ENCODE measurements at regions of chr6 and their contacts with region 1.

Region 1: DNA sequence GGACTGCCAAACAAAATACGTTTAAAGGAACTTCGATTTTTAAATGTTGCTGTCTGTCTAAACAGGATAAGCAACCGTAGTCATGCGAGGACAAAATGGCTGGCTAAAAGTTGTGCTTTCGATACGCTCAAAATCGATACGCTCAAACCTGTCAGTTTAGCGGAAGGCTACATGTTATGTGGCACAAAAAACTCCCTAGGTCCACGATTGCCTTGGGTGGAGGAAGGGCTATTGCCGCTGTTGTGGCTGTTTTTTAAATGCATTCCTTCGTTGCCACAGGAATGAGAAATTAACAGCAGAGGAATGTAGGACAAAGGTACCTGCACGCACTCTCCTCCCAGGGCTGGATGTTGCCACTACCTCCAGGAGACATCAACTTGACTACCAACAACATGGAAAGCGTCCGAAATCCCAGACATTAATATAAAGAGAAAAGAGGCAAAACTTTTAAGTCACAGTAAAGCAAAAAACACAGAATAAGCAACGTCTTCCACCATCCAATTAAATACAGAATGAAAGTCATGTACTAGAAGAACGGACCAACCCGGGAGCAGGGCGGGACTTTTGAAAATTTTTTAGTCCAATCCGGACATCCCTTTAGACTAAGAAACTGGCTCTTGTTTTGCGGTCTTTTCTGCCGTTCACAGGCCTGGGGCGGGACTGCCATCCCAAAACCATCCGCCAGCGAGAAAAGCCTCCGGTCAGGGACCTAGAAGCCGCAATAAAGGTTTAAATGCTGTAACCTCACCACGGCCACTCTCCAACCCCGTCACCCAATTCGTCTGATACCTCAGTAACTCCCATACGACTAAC is 32.2 kb upstream of the HFE start:
- DNase-seq: peak; percentile 97
- H3K4me3 ChIP-seq: peak overlapping the region; percentile 59 to 83 (median 78)
- H3K27ac ChIP-seq: peak overlapping the region; percentile 88 to 99 (median 97)
- H3K4me1 ChIP-seq: peaks cover 2 to 15% (median 7%) of the 10 kb centered on the region in 4 donors
- H3K27me3 ChIP-seq: no peaks in the 10 kb centered on the region
- CTCF ChIP-seq: peak in 3 of 4 experiments; percentile 12 to 39 (median 34)
- EP300 ChIP-seq: no peak
- POLR2A ChIP-seq: peak; percentile 72 to 74

Region 2: GRCh38 chr6:25981568-25982263 is 73.3 kb before region 1 on chr6:
- intact Hi-C with region 1: no loop called
- DNase-seq: no peak
- H3K4me3 ChIP-seq: no peak overlapping the region
- H3K27ac ChIP-seq: no peak overlapping the region
- H3K4me1 ChIP-seq: no peaks in the 10 kb centered on the region
- H3K27me3 ChIP-seq: no peaks in the 10 kb centered on the region
- CTCF ChIP-seq: no peak
- EP300 ChIP-seq: no peak
- POLR2A ChIP-seq: no peak

Region 3: GRCh38 chr6:26031595-26032339 is 23.3 kb before region 1 on chr6:
- intact Hi-C with region 1: loop called (anchors 1 kb)
- DNase-seq: peak; percentile 92
- H3K4me3 ChIP-seq: peak overlapping the region; percentile 1 to 59 (median 54)
- H3K27ac ChIP-seq: peak overlapping the region; percentile 90 to 94 (median 92)
- H3K4me1 ChIP-seq: peaks cover 0 to 29% (median 25%) of the 10 kb centered on the region in 4 donors
- H3K27me3 ChIP-seq: no peaks in the 10 kb centered on the region
- CTCF ChIP-seq: peak in 1 of 4 experiments; percentile 22
- EP300 ChIP-seq: no peak
- POLR2A ChIP-seq: no peak

Region 4: DNA sequence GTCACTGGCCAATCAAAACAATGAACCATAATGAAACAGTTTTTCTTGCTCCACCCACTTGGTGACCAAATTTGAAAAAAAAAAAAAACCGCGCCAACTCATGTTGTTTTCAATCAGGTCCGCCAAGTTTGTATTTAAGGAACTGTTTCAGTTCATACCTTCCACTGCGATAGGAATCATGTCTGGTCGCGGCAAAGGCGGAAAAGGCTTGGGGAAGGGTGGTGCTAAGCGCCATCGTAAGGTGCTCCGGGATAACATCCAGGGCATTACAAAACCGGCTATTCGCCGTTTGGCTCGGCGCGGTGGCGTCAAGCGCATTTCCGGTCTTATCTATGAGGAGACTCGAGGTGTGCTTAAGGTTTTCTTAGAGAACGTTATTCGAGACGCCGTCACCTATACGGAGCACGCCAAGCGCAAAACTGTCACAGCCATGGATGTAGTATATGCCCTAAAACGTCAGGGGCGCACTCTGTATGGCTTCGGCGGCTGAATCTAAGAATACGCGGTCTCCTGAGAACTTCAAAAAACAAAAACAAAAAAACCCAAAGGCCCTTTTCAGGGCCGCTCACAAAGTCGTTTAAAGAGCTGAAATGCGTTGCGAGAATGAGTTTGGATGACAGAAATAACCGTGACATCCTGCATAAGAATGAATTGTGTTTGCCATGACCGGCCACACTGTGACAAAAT is 48.9 kb after region 1 on chr6:
- intact Hi-C with region 1: loop called (anchors 2 kb)
- DNase-seq: peak; percentile 97
- H3K4me3 ChIP-seq: peak overlapping the region; percentile 34 to 58 (median 52)
- H3K27ac ChIP-seq: peak overlapping the region; percentile 82 to 92 (median 90)
- H3K4me1 ChIP-seq: peaks cover 0 to 12% (median 11%) of the 10 kb centered on the region in 4 donors
- H3K27me3 ChIP-seq: no peaks in the 10 kb centered on the region
- CTCF ChIP-seq: peak; percentile 38 to 49 (median 42)
- EP300 ChIP-seq: peak in 2 of 4 donors; percentile 19 to 63
- POLR2A ChIP-seq: peak; percentile 97 to 99